ENCODE measurements at regions of chr6 and their contacts with region 1.

Region 1: GRCh38 chr6:149028767-149029405 is 282.1 kb downstream of the UST start:
- DNase-seq: peak; percentile 89
- H3K4me3 ChIP-seq: no peak overlapping the region
- H3K27ac ChIP-seq: no peak overlapping the region
- H3K4me1 ChIP-seq: no peaks in the 10 kb centered on the region
- CTCF ChIP-seq: peak; percentile 93

Region 2: DNA sequence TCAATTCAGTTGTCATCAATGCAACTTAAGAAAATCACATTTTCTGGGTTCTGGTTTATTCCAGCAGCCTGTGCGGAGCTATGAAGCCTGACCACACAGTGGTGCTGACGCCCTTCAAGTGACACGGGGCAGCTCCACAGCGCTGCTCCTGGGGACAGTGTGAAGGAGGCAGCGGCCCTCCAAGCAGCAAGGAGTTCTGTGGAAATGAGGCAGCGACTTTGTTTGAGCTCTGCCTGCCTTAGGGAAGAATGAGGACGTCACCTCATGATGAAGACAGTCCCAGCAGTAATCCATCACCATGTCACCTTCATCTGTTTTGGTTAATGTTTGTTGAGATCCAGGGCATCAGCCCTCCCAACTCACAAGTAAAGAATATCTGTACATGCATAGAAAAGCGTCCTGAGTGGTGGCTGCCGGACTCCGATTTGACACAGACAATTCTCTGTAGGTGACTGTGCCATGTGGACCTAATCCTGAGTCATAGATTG is 450.6 kb before region 1 on chr6:
- CTCF ChIA-PET with region 1: interaction called, 6 read pairs
- POLR2A ChIA-PET with region 1: no interaction called
- intact Hi-C with region 1: loop called (anchors 2 kb)
- DNase-seq: peak; percentile 69
- H3K4me3 ChIP-seq: no peak overlapping the region
- H3K27ac ChIP-seq: no peak overlapping the region
- H3K4me1 ChIP-seq: no peaks in the 10 kb centered on the region
- CTCF ChIP-seq: peak; percentile 93

Region 3: DNA sequence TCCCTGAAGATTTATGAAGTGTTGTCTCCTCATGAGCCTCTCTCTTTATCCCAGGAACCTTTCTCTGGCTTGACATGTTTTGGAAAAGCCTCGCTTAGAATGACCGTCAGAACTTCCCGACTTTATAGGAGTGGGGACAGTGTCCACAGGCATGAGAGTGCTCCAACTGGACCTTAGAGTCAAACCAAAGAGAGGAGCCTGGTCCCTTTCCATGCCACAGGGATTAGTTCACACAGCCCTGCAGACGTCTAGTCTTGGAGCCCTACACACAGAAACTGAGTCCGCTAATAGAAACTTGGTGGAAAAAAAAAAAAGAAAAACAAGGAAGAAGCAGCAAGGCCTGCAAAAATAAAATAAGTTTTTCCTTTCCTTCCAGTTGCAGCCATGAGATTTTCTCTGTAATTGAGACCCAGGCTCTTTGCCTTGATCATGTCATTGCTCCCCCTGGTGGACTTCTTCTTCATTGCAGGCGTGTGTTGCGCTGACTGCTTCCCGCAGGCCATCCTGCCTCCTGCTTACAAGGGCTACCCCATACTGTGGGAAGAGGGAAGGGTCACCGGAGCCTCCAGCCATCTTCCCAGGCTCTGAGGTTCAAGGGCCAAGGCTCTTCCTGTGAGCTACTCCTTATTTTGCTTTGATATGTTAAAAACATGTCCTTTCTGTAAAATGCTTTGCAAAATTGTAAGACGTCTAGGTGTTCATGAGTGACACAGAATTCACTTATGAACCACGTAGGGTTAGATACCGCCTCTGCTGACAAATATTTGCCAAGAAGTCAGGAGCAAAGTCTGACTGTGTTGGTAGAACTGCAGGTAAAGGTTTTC is 81.1 kb before region 1 on chr6:
- CTCF ChIA-PET with region 1: no interaction called
- POLR2A ChIA-PET with region 1: no interaction called
- intact Hi-C with region 1: loop called (anchors 1 kb)
- DNase-seq: peak; percentile 78
- H3K4me3 ChIP-seq: no peak overlapping the region
- H3K27ac ChIP-seq: no peak overlapping the region
- H3K4me1 ChIP-seq: no peaks in the 10 kb centered on the region
- CTCF ChIP-seq: peak; percentile 93

Region 4: DNA sequence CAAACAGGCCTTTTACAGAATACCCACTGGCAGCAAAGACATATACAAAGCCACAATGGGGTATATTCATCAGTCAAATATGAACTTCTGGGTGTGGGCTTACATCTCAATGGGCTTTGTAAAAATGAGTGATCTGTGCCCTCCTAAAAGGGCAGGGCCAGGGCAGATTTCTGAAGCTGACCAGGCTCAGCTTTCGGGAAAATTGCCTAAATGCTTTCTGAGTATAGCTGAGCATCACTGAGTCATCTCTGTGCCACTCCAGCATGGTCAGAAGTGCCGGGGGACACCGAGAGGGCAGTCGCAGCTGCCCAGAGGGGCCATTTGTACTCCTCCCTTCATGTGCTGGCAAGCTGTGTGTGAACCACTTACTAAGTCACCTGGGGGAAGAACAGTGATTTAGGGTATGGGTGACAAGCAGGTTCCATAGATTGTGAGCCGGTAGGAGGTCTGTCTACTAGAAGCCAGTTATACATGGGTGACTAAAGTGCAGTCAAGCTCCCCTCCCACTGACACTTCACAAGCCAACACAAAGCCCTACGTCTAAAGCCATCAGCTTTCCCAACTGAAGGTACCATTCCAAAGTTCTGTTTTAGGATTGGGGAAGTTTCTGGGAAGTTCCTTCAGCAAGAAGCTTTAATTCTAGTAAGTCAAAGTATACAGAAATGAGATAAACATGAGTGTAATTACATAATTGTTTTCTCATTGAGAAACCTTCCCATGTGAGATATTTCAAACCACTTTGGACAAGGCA is 141.1 kb after region 1 on chr6:
- CTCF ChIA-PET with region 1: no interaction called
- POLR2A ChIA-PET with region 1: no interaction called
- intact Hi-C with region 1: loop called (anchors 10 kb)
- DNase-seq: no peak
- H3K4me3 ChIP-seq: no peak overlapping the region
- H3K27ac ChIP-seq: no peak overlapping the region
- H3K4me1 ChIP-seq: no peaks in the 10 kb centered on the region
- CTCF ChIP-seq: no peak

Region 5: GRCh38 chr6:149316798-149317655 is 288.1 kb after region 1 on chr6:
- CTCF ChIA-PET with region 1: no interaction called
- POLR2A ChIA-PET with region 1: no interaction called
- intact Hi-C with region 1: loop called (anchors 5 kb)
- DNase-seq: peak; percentile 94
- H3K4me3 ChIP-seq: peak overlapping the region; percentile 75
- H3K27ac ChIP-seq: peak overlapping the region; percentile 86
- H3K4me1 ChIP-seq: peaks cover 20% of the 10 kb centered on the region
- CTCF ChIP-seq: peak; percentile 46; the same call in 1 of the 2 replicates

Region 6: GRCh38 chr6:149513915-149514314 is 485.0 kb after region 1 on chr6:
- CTCF ChIA-PET with region 1: no interaction called
- POLR2A ChIA-PET with region 1: no interaction called
- intact Hi-C with region 1: loop called (anchors 2 kb)
- DNase-seq: no peak
- H3K4me3 ChIP-seq: no peak overlapping the region
- H3K27ac ChIP-seq: no peak overlapping the region
- H3K4me1 ChIP-seq: no peaks in the 10 kb centered on the region
- CTCF ChIP-seq: no peak

Region 7: DNA sequence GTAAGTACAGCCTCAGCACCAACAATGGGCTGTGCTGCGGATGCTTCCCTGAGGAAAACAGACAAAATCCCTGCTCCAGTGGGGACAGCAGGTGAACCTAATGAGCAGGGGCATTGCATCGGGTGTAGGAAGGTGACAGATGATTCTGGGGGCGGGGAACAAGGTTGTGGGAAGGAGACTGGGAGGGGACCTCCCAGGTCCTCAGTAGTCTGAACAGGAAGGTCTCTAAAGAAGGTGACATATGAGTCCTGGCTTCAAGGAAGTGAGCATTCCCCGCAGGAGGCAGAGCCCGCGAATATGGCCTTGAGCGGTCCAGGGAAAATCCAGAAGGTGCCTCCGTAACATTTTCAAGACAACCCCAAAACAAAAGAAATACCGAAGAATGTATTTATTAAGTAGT is 954.3 kb after region 1 on chr6:
- CTCF ChIA-PET with region 1: no interaction called
- POLR2A ChIA-PET with region 1: no interaction called
- intact Hi-C with region 1: no loop called
- DNase-seq: no peak
- H3K4me3 ChIP-seq: no peak overlapping the region
- H3K27ac ChIP-seq: no peak overlapping the region
- H3K4me1 ChIP-seq: no peaks in the 10 kb centered on the region
- CTCF ChIP-seq: no peak

Measured in OCI-LY7 (cell line).